ENCODE measurements at regions of chr11 and their contacts with region 1.

Region 1: DNA sequence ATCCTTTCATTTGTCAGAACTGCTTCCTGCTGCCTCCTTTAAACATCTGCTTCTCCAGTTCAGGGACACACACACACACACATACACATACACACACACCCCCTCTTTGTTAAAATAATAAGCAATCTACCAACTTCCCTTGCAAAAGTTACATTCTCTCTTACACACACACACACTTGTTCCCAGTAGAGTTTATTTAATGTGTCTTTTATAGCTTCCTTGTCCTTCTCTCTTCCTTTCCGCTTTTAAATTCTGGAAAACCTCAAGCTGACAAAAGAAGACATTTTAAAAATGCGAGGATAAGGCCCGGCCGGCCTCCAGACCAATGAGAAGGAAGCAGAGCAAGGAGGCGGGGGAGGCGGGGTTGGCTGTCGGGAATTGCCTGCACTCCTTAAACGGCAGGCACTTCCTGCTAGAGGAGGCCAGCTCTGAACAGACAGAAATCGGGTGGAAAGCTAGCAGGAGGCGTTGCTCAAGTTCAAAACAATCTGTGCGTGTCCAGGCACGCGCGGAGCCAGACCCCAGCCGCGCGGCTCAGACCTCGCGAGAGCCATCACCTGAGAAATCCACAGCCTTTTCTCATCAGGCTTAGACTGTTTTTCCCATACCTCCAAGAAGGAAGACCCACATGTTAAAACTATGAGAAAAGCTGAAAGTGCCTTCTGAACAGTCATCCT is 99.9 kb downstream of the MAML2 start:
- DNase-seq: peak; percentile 99
- H3K4me3 ChIP-seq: peak overlapping the region; percentile 38
- H3K4me3 Mint-ChIP-seq: peak overlapping the region; percentile 74
- H3K27ac Mint-ChIP-seq: peak overlapping the region; percentile 88
- H3K4me1 ChIP-seq: peaks cover 38% of the 10 kb centered on the region
- H3K4me1 Mint-ChIP-seq: peaks cover 21% of the 10 kb centered on the region
- H3K27me3 ChIP-seq: no peaks in the 10 kb centered on the region
- H3K27me3 Mint-ChIP-seq: no peaks in the 10 kb centered on the region
- CTCF ChIP-seq: no peak

Region 2: DNA sequence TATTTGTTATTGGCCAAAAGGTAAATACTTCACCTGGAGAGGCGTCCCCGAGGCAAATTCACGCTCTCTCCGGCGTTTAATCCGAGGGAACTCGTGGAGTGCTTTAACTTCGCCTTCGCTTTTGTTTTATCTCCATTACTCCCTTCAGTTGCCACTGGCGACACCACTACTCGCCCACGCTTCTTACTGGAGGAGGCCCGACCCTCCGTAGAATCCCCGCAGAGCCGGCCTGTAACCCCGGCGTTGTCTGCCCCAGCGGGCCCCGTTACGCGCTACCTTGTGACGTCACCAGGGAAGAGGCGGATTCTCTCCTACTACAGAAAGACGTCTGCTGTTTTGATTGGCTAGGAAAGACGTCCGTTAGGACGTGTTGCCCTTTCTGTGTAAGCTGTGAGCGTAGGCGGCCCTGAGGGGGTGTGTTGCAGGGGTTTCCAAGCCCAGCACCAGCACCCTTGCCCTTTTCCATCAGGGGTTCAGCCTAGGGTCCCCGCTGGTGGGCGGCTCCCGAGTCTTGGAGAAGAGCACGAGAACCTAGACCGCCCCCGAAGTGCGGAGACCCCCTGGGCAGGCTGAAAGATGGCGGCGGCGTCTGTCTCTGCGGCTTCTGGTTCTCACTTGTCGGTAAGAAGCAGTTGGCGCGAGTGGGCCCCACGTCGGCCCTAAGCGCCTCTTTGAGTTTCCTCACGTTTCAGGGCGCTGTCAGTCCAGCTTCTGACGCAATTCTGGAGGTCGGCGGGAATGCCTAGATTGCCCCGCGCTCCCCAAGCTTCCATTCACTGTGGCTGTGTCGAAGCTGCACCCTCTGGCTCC is 452.8 kb before region 1 on chr11 and contains the start of gene CEP57:
- CTCF ChIA-PET with region 1: no interaction called
- POLR2A ChIA-PET with region 1: interaction called, 3 read pairs
- intact Hi-C with region 1: loop called (anchors 1 kb)
- DNase-seq: peak; percentile 99
- H3K4me3 ChIP-seq: peak within 1 kb of the TSS; percentile 72
- H3K4me3 Mint-ChIP-seq: peak within 1 kb of the TSS; percentile 72
- H3K27ac Mint-ChIP-seq: peak within 1 kb of the TSS; percentile 100
- H3K4me1 ChIP-seq: peaks cover 19% of the 10 kb centered on the region; the same call in 1 of the 2 replicates
- H3K4me1 Mint-ChIP-seq: peaks cover 23% of the 10 kb centered on the region
- H3K27me3 ChIP-seq: no peaks in the 10 kb centered on the region
- H3K27me3 Mint-ChIP-seq: no peaks in the 10 kb centered on the region
- CTCF ChIP-seq: no peak
- total RNA-seq, gene CEP57: 117 and 125 TPM in 2 replicates

Region 3: DNA sequence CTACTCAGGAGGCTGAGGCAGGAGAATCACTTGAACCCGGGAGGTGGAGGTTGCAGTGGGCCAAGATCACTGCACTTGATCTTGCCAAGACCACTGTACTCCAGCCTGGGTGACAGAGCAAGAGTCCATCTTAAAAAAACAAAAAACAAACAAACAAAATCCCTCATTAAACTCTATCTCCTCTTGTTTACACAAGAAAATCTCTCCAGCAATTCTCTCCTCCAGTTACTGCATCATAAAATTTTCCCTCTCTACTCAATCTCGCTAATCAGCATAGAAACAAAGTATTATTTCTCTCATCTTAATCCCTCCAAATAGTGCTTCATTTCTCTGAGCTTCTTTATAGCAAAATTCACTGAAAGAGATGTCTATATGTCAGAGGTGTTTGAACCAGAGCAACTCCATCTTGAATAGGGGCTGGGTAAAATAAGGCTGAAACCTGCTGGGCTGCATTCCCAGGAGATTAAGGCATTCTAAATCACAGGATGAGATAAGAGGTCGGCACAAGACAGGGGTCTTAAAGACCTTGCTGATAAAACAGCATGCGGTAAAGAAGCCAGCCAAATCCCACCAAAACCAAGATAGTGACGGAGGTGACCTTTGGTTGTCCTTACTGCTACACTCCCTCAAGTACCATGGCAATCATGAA is 339.0 kb before region 1 on chr11:
- CTCF ChIA-PET with region 1: no interaction called
- POLR2A ChIA-PET with region 1: interaction called, 3 read pairs
- intact Hi-C with region 1: loop called (anchors 5 kb)
- DNase-seq: peak; percentile 86 to 90
- H3K4me3 ChIP-seq: no peak overlapping the region
- H3K4me3 Mint-ChIP-seq: no peak overlapping the region
- H3K27ac Mint-ChIP-seq: no peak overlapping the region
- H3K4me1 ChIP-seq: peaks cover 49% of the 10 kb centered on the region
- H3K4me1 Mint-ChIP-seq: peaks cover 9% of the 10 kb centered on the region
- H3K27me3 ChIP-seq: no peaks in the 10 kb centered on the region
- H3K27me3 Mint-ChIP-seq: no peaks in the 10 kb centered on the region
- CTCF ChIP-seq: no peak

Region 4: DNA sequence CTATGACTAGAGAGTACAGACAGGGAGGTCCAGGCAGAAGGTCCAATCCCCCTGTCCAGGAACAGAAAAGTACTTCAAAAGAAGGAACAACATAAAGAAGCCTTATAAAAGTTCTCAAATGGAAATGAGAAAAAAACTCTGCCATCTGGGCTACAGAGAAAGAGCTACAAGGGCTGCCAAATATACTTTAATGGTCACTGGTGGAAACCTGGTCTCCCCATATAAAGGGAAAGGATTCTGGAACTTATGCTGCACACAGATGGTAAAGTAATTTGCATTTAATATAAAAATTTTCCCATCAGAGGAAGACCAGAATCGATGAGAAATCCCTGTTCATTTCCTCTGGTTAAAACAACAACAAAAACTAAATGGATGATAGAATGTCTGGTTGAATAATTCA is 199.8 kb before region 1 on chr11:
- CTCF ChIA-PET with region 1: no interaction called
- POLR2A ChIA-PET with region 1: interaction called, 16 read pairs
- intact Hi-C with region 1: no loop called
- DNase-seq: no peak
- H3K4me3 ChIP-seq: no peak overlapping the region
- H3K4me3 Mint-ChIP-seq: no peak overlapping the region
- H3K27ac Mint-ChIP-seq: no peak overlapping the region
- H3K4me1 ChIP-seq: 0 out of 2 replicates have a peak, but pooled peaks cover 6% of the 10 kb centered on the region
- H3K4me1 Mint-ChIP-seq: peaks cover 19% of the 10 kb centered on the region
- H3K27me3 ChIP-seq: no peaks in the 10 kb centered on the region
- H3K27me3 Mint-ChIP-seq: no peaks in the 10 kb centered on the region
- CTCF ChIP-seq: no peak

Region 5: DNA sequence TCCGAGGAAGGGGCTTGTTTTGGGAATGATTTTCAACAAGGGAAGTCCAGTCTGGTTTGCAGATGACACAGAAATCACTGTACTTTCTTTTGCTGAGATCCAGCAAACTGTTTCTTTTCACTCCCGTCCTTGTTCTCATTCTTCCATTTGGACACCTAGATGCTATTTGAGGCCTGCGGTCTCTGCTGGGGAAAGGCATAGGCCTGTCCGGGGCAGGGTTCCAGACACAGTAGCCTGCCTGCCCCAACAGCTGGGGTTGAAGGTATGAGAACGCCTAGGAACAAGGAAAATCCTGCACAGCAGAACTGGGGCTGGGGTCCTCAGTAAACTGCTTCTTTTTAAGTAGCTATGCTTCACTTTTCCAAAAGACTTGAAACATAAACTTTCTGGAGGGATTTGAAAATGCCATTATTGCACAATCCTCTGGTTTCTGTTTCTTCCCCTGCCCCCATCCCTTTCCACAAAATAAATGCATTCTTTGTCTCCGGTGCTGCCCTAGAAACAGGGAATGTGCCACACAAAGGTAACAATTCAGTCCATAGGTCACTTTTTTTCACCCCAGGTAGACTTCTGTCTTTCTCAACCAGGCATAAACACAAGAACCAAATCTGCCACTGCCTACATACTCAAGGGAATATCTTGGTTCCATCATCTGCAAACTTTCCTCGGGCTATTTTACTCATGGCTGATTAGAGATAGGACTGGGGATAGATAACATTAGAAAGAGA is 144.4 kb before region 1 on chr11:
- CTCF ChIA-PET with region 1: interaction called, 3 read pairs
- POLR2A ChIA-PET with region 1: no interaction called
- intact Hi-C with region 1: loop called (anchors 1 kb)
- DNase-seq: peak; percentile 90 to 91
- H3K4me3 ChIP-seq: no peak overlapping the region
- H3K4me3 Mint-ChIP-seq: peak overlapping the region; percentile 65
- H3K27ac Mint-ChIP-seq: peak overlapping the region; percentile 94
- H3K4me1 ChIP-seq: peaks cover 75% of the 10 kb centered on the region
- H3K4me1 Mint-ChIP-seq: peaks cover 71% of the 10 kb centered on the region
- H3K27me3 ChIP-seq: no peaks in the 10 kb centered on the region
- H3K27me3 Mint-ChIP-seq: no peaks in the 10 kb centered on the region
- CTCF ChIP-seq: no peak

Region 6: DNA sequence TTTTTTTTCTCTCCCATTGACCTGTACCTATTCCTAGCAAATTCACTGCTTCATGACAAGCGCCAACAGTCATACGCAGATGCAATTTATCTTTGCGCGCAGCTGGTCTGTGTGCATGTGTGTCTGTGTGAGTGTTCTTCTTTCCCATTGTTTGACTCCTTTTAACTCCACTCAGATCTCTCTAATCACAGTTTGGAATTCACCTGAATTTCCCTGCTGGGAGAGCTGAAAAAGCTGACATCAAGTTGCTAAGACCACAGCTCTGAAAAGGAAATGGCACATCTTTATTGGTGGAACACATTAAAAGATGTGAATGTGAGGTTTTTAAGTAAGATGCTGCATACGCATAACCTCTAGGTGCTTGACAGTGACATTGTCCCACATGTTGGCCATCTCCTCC is 131.8 kb before region 1 on chr11:
- CTCF ChIA-PET with region 1: no interaction called
- POLR2A ChIA-PET with region 1: no interaction called
- intact Hi-C with region 1: no loop called
- DNase-seq: no peak
- H3K4me3 ChIP-seq: no peak overlapping the region
- H3K4me3 Mint-ChIP-seq: no peak overlapping the region
- H3K27ac Mint-ChIP-seq: no peak overlapping the region
- H3K4me1 ChIP-seq: peaks cover 18% of the 10 kb centered on the region
- H3K4me1 Mint-ChIP-seq: peaks cover 10% of the 10 kb centered on the region
- H3K27me3 ChIP-seq: no peaks in the 10 kb centered on the region
- H3K27me3 Mint-ChIP-seq: no peaks in the 10 kb centered on the region
- CTCF ChIP-seq: no peak

Region 7: DNA sequence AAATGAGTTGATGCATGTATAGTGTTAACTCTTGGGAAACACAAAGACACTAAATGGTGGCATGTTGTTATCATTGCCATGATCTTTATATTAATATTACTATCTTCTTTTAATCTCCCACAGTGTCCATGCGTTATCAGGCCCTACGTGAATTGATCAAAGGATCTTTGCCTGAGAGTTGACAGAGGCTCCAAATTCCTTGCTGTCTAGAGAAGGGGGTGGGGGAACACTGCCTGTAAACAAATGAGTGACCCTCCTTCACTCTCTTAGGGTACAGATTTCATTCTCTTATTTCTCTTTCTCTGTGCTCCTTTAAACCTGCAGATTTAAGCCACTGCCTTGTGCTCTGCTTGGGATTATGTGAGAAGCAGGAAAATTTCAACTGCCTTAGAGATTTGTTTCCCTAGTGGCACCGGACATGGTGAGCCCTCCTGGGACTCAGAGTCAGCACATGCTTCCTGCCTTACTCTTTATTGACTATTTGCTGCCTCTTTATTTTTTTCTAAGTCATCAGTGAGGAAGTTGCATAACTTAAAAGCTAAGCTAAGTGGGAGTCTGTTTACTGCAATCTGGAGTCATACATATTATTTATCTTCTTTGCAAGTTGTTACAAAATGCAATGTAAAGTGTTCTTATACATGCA is 23.0 kb before region 1 on chr11:
- CTCF ChIA-PET with region 1: no interaction called
- POLR2A ChIA-PET with region 1: no interaction called
- intact Hi-C with region 1: loop called (anchors 1 kb)
- DNase-seq: peak; percentile 65 to 67
- H3K4me3 ChIP-seq: no peak overlapping the region
- H3K4me3 Mint-ChIP-seq: peak overlapping the region; percentile 45
- H3K27ac Mint-ChIP-seq: peak overlapping the region; percentile 81
- H3K4me1 ChIP-seq: peaks cover 47% of the 10 kb centered on the region
- H3K4me1 Mint-ChIP-seq: peaks cover 46% of the 10 kb centered on the region
- H3K27me3 ChIP-seq: no peaks in the 10 kb centered on the region
- H3K27me3 Mint-ChIP-seq: no peaks in the 10 kb centered on the region
- CTCF ChIP-seq: no peak

Region 8: DNA sequence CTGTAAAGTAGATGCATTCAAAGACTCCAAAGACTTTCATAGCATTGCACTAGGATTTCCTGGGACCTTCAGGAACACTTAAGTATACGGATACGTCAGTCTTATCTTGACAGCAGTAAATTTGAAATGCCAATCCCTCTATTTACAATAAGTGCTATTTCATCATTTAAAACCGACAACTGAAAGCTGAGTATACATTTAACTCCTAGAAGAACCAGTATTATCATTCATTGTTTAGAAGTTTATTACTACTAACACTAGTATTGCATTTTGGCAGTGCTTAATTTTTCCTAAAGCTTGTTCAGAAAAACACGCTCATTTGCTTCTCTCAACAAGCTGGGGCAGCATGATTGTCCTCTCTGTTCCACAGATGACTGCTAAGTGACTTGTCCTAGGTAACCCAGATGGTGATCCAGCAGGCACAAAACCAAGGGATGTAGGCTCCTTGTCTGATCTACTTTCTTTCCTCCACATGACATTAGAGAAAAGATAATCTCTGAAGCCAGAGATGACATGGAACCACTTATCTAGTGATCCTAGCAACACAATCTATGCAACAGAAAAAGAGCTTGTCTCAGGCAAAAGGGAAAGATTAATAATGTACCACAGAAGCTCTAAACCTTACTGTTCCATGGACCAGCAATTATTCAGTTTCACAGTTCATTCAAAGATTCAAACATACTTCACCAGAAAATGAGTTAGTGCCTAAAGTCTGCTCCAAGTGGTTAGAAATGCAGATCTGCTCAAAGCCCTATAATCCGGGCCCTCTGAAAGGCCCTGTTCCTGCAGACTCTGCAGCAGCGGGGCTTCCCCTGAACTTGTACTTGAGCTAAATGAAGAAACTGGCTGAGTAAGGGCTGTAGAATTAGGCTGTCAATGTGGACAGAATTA is 94.7 kb after region 1 on chr11:
- CTCF ChIA-PET with region 1: interaction called, 58 read pairs
- POLR2A ChIA-PET with region 1: interaction called, 12 read pairs
- intact Hi-C with region 1: loop called (anchors 1 kb)
- DNase-seq: peak in 1 of 2 experiments; percentile 64
- H3K4me3 ChIP-seq: no peak overlapping the region
- H3K4me3 Mint-ChIP-seq: peak overlapping the region; percentile 10
- H3K27ac Mint-ChIP-seq: peak overlapping the region; percentile 10
- H3K4me1 ChIP-seq: peaks cover 46% of the 10 kb centered on the region
- H3K4me1 Mint-ChIP-seq: peaks cover 47% of the 10 kb centered on the region
- H3K27me3 ChIP-seq: no peaks in the 10 kb centered on the region
- H3K27me3 Mint-ChIP-seq: no peaks in the 10 kb centered on the region
- CTCF ChIP-seq: no peak

Region 9: DNA sequence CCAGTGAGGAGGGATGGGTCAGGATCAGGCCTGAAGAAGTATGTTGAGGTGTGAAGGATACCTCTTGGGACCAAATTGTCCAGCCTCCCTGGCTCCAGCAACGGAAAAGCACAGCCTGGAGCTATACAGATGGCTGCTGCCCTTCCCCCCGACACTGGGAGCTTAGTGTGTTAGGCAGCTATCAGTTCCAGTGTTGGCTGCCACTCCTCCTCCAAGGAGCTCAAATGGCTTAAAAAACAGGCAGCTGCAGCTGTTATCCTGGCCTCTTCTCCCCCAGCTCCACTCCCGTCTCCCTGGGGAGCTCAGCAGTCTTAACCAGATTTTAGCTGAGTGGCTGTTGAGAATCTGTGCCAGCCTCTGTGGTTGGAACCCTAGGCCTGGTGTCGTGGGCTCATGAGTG is 371.7 kb after region 1 on chr11:
- CTCF ChIA-PET with region 1: no interaction called
- POLR2A ChIA-PET with region 1: no interaction called
- intact Hi-C with region 1: no loop called
- DNase-seq: no peak
- H3K4me3 ChIP-seq: no peak overlapping the region
- H3K4me3 Mint-ChIP-seq: no peak overlapping the region
- H3K27ac Mint-ChIP-seq: no peak overlapping the region
- H3K4me1 ChIP-seq: peaks cover 15% of the 10 kb centered on the region
- H3K4me1 Mint-ChIP-seq: peaks cover 7% of the 10 kb centered on the region
- H3K27me3 ChIP-seq: no peaks in the 10 kb centered on the region
- H3K27me3 Mint-ChIP-seq: no peaks in the 10 kb centered on the region
- CTCF ChIP-seq: no peak